K562 (cell line): ENCODE measurements at regions of chr19 and their contacts with region 1.

Region 1: GRCh38 chr19:10408511-10409283 is 5.4 kb upstream of the CDC37 start:
- DNase-seq: peak in 1 of 4 experiments; percentile 2
- ATAC-seq: no peak
- H3K4me3 ChIP-seq: no peak overlapping the region
- H3K27ac ChIP-seq: no peak overlapping the region
- H3K4me1 ChIP-seq: peaks cover 6 to 24% of the 10 kb centered on the region in 2 experiments; a peak in 4 of 5 replicates
- H3K27me3 ChIP-seq: no peaks in the 10 kb centered on the region
- CTCF ChIP-seq: no peak
- EP300 ChIP-seq: no peak
- POLR2A ChIP-seq: no peak
- RAD21 ChIP-seq: no peak

Region 2: DNA sequence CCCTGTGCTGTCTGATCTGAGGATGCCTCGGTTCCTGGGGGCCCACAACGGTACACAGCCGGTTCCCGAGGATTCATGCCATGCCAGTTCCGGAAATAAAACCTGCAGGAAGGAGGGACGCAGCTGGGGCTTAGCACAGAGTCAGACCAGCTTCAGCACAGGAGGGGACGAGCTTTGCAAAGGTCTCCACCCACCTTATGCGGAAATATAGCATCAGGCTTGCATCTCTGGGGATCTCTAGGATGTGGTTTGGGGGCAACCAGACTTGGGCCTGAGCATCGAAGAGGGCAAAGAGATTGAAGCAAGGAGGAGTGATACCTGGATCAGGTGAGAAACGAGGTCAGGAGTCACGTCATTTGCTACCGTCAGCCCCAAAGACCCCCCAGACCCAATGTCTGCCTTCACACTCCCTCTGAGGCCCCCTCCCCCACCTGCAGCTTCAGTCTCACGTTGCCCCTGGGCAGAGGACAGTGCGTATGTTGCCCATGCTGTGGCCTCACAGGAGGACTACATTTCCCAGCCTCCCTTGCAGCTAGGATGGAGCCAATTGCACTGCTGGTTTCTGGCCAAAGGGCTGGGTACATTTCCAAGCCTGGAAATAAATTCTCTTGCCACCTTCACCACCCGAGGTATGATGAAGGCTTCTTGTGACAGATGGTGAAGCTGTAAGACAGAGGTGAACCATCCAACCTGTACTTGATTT is 40.4 kb before region 1 on chr19:
- CTCF ChIA-PET with region 1: no interaction called
- POLR2A ChIA-PET with region 1: no interaction called
- in situ Hi-C with region 1: no loop called
- intact Hi-C with region 1: no loop called
- DNase-seq: peak in 1 of 4 experiments; percentile 17
- ATAC-seq: peak; percentile 57; the same call in 1 of the 3 replicates
- H3K4me3 ChIP-seq: no peak overlapping the region
- H3K27ac ChIP-seq: no peak overlapping the region
- H3K4me1 ChIP-seq: peaks cover 0 to 4% of the 10 kb centered on the region in 2 experiments; a peak in 1 of 5 replicates
- H3K27me3 ChIP-seq: no peaks in the 10 kb centered on the region
- CTCF ChIP-seq: no peak
- EP300 ChIP-seq: no peak
- POLR2A ChIP-seq: no peak
- RAD21 ChIP-seq: no peak

Region 3: GRCh38 chr19:10574462-10574861 is 165.8 kb after region 1 on chr19:
- CTCF ChIA-PET with region 1: no interaction called
- POLR2A ChIA-PET with region 1: interaction called, 4 read pairs
- in situ Hi-C with region 1: loop called (anchors 5 kb)
- intact Hi-C with region 1: loop called (anchors 5 kb)
- DNase-seq: no peak
- ATAC-seq: no peak
- H3K4me3 ChIP-seq: no peak overlapping the region
- H3K27ac ChIP-seq: no peak overlapping the region
- H3K4me1 ChIP-seq: peaks cover 10 to 24% of the 10 kb centered on the region in 2 experiments; a peak in 4 of 5 replicates
- H3K27me3 ChIP-seq: no peaks in the 10 kb centered on the region
- CTCF ChIP-seq: no peak
- EP300 ChIP-seq: no peak
- POLR2A ChIP-seq: no peak
- RAD21 ChIP-seq: no peak